Naive thymus-derived CD8-positive, alpha-beta T cell (primary cell): ENCODE measurements at regions of chr2 and their contacts with region 1.

Region 1: DNA sequence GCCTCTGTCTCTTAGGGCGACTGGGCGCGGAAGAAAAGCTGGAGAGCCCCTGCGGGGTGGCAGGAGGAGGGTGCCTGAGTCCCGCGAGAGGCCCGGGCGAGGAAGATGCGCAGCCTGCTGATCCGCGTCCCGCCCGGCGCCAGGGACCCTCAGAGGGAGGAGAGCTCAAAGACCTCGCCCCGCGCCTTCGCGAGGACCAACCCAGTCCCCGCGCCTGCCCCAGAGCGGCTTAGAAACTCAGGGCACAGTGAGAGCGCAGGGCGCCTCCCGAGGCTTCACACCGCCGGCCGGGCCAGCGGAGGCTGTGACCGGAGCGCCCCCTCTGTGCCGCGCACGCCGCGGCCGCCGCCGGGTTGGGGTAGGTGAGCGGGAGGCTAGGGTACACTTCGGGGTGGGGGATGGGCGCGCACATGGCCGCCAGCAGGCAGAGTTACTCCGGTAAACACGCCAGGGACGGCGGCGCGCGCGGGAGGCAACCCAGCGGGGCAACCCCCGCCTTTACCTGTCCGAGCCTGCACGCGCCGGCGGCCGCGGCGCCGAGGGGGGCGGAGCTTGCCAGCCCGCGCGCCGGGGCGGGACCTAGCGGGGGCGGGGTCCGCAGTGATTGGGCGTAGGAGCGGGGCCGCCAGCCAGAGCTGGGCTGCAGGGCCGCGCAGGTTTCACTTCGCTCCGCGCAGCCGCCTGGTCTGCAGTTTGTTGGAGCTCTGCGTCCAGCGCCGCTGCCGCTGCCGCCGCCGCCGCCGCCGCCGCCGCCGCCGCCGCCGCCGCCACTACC is at the start of gene BCL2L11:
- DNase-seq: peak; percentile 82 to 92 (median 88)
- ATAC-seq: peak; percentile 70
- H3K4me3 Mint-ChIP-seq: peak within 1 kb of the TSS; percentile 91 to 97 (median 94)
- H3K27ac Mint-ChIP-seq: peak within 1 kb of the TSS; percentile 76 to 95 (median 91)
- H3K4me1 Mint-ChIP-seq: peaks cover 24 to 64% (median 52%) of the 10 kb centered on the region in 4 donors
- H3K27me3 Mint-ChIP-seq: peaks cover 5 to 32% (median 26%) of the 10 kb centered on the region in 5 donors
- polyA plus RNA-seq, gene BCL2L11: 8.7 to 16.2 (median 10.4) TPM

Region 2: GRCh38 chr2:110853507-110853906 is 266.9 kb before region 1 on chr2:
- POLR2A ChIA-PET with region 1: interaction called, 18 read pairs
- DNase-seq: peak in 8 of 10 donors; percentile 37 to 73 (median 50)
- ATAC-seq: no peak
- H3K4me3 Mint-ChIP-seq: peak overlapping the region in 9 of 10 donors; percentile 2 to 83 (median 67)
- H3K27ac Mint-ChIP-seq: peak overlapping the region; percentile 76 to 95 (median 86)
- H3K4me1 Mint-ChIP-seq: peaks cover 43 to 81% (median 65%) of the 10 kb centered on the region in 4 donors
- H3K27me3 Mint-ChIP-seq: no peaks in the 10 kb centered on the region

Region 3: DNA sequence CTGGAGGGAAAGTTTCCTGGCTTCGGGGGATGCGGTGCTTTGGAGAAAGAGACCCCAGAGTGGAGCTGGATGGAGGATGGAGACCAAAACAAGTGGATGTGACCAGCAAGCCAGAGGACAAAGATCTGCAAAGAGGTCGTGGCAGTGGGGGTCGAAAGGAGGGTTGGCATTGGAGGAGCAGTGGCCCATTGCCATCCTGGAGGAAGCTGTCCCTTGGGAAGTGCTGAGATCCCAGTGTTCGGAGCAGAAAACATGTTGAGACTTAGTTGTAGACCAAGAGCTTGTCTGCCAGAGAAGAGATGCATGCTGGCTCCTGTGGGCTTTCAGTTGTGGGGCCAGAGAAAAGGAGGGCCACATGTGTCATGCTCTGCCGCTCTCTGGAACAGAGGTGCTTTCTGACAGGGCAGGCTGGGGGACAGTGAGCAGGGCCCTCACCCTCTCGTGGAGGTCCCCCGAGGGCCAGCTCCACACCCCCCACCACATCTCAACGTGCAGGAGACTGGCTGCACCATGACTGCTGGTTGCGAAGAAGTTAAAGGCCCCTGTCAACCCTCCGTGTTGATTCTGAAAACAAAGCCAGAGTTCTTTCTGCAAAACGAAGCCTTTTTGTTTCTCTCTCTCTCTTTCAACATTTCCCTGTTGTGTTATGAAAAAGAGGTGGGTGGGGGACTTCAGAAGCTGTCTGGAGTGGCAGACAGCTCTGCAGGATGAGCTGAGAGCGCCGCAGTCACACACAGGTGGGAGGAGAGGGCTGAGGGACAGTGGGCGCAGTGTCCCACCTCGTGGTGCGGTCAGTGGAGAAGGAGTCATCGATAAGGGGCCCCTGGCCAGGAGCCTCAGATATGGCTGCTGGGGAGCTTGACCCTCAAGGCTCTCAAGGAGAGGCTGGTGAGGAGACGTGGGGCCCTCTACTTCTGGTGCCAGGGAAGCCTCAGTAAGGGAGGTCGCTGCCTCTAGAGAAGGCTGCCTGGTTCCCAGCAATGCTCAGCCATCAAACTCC is 77.4 kb before region 1 on chr2:
- POLR2A ChIA-PET with region 1: no interaction called
- DNase-seq: peak in 1 of 10 donors; percentile 5
- ATAC-seq: peak; percentile 52 to 70
- H3K4me3 Mint-ChIP-seq: peak overlapping the region in 7 of 10 donors; percentile 7 to 71 (median 62)
- H3K27ac Mint-ChIP-seq: peak overlapping the region in 8 of 10 donors; percentile 8 to 81 (median 36)
- H3K4me1 Mint-ChIP-seq: peaks cover 12 to 28% (median 27%) of the 10 kb centered on the region in 4 donors
- H3K27me3 Mint-ChIP-seq: peaks cover 0 to 6% (median 0%) of the 10 kb centered on the region in 5 donors

Region 4: DNA sequence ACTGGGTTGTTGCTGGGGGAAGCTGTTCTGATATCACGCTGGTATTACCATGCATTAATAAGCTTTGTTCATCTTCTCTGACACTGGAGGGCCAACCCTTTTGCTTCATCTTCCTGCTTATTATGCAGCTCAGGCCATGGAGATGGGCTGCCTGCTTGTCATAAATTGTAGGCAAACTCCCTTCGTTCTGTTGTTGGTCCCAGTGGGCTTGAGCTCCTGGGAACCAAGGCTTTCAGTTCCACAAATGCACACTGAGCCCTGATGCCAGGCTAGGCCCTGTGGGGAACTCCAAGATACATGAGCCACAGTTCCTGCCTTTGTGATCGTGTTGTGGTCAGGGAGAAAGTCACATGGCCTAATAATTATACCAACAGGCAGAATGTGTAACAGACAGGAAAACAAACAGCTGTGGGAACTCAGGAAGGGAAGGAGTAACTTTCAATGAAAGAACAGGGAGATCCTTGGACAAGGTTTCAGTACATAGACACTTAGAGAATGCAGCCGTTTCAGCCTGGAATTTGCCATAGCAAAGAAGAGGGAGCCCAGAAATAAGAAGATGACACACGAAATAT is 48.8 kb before region 1 on chr2:
- POLR2A ChIA-PET with region 1: no interaction called
- DNase-seq: no peak
- ATAC-seq: no peak
- H3K4me3 Mint-ChIP-seq: no peak overlapping the region
- H3K27ac Mint-ChIP-seq: no peak overlapping the region
- H3K4me1 Mint-ChIP-seq: peaks cover 0 to 7% (median 0%) of the 10 kb centered on the region in 4 donors
- H3K27me3 Mint-ChIP-seq: peaks cover 0 to 1% (median 0%) of the 10 kb centered on the region in 5 donors